Naive thymus-derived CD4-positive, alpha-beta T cell (primary cell): ENCODE measurements at regions of chr17 and their contacts with region 1.

Region 1: DNA sequence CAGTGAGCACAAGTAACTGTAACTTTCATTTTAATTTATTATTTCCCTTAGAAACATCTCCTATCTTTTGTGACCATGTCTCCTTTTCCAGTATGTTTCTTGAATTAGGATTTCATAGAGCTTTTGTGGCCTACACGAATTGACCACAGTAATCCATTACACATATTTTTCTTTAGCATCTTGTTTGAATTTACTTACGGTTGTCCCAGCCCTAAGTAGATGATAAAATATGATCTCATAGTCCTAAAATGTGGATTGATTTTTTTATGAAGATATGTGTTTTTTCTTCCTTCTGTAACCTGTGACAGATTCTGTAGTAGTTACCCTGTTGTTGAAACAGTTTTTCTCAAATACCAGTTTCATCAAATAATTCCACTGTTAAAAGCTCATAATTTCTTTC is 61.5 kb downstream of the NF1 start:
- DNase-seq: no peak
- ATAC-seq: no peak
- H3K4me3 ChIP-seq: no peak overlapping the region
- H3K4me3 Mint-ChIP-seq: no peak overlapping the region
- H3K27ac ChIP-seq: no peak overlapping the region
- H3K27ac Mint-ChIP-seq: peak overlapping the region in 1 of 9 donors; percentile 5
- H3K4me1 ChIP-seq: no peaks in the 10 kb centered on the region
- H3K4me1 Mint-ChIP-seq: peaks cover 0 to 23% (median 16%) of the 10 kb centered on the region in 7 donors
- H3K27me3 ChIP-seq: no peaks in the 10 kb centered on the region
- H3K27me3 Mint-ChIP-seq: no peaks in the 10 kb centered on the region

Region 2: DNA sequence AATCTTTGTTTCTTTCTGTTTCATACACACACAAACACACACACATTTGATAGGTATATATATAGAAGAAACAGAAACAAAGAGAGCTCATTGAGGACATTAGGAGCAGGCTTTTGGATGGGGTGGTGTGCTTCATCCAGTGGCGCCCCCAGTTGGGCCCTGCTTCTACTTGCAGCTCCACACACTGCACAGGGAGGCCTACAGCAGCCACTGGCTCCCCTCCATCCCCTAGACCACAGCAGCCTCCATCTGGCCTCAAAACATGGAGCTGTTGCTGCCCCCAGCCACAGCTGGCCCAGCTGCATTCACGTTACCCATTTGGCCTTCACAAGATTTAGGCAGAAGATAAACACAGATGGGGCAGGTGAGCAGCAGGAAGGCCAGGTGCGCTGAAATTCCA is 94.6 kb before region 1 on chr17:
- CTCF ChIA-PET with region 1: no interaction called
- POLR2A ChIA-PET with region 1: no interaction called
- intact Hi-C with region 1: no loop called
- DNase-seq: no peak
- ATAC-seq: no peak
- H3K4me3 ChIP-seq: no peak overlapping the region
- H3K4me3 Mint-ChIP-seq: no peak overlapping the region
- H3K27ac ChIP-seq: no peak overlapping the region
- H3K27ac Mint-ChIP-seq: no peak overlapping the region
- H3K4me1 ChIP-seq: no peaks in the 10 kb centered on the region
- H3K4me1 Mint-ChIP-seq: peaks cover 0 to 2% (median 0%) of the 10 kb centered on the region in 7 donors
- H3K27me3 ChIP-seq: no peaks in the 10 kb centered on the region
- H3K27me3 Mint-ChIP-seq: no peaks in the 10 kb centered on the region

Region 3: GRCh38 chr17:31094600-31095238 is 61.6 kb before region 1 on chr17 and contains the start of gene NF1:
- CTCF ChIA-PET with region 1: no interaction called
- POLR2A ChIA-PET with region 1: no interaction called
- intact Hi-C with region 1: loop called in 1 of 2 experiments (anchors 5 kb)
- DNase-seq: peak; percentile 57 to 86 (median 72)
- ATAC-seq: peak; percentile 88
- H3K4me3 ChIP-seq: peak within 1 kb of the TSS; percentile 71
- H3K4me3 Mint-ChIP-seq: peak within 1 kb of the TSS; percentile 83 to 98 (median 94)
- H3K27ac ChIP-seq: peak within 1 kb of the TSS; percentile 76
- H3K27ac Mint-ChIP-seq: peak within 1 kb of the TSS; percentile 80 to 97 (median 92)
- H3K4me1 ChIP-seq: peaks cover 0 to 8% of the 10 kb centered on the region in 2 donors
- H3K4me1 Mint-ChIP-seq: peaks cover 10 to 22% (median 13%) of the 10 kb centered on the region in 7 donors
- H3K27me3 ChIP-seq: no peaks in the 10 kb centered on the region
- H3K27me3 Mint-ChIP-seq: no peaks in the 10 kb centered on the region
- total RNA-seq, gene NF1: 18.8 to 32.4 (median 21.2) TPM

Region 4: GRCh38 chr17:31171701-31172100 is 15.4 kb after region 1 on chr17:
- CTCF ChIA-PET with region 1: no interaction called
- POLR2A ChIA-PET with region 1: no interaction called
- intact Hi-C with region 1: no loop called
- DNase-seq: no peak
- ATAC-seq: no peak
- H3K4me3 ChIP-seq: no peak overlapping the region
- H3K4me3 Mint-ChIP-seq: no peak overlapping the region
- H3K27ac ChIP-seq: no peak overlapping the region
- H3K27ac Mint-ChIP-seq: no peak overlapping the region
- H3K4me1 ChIP-seq: no peaks in the 10 kb centered on the region
- H3K4me1 Mint-ChIP-seq: peaks cover 0 to 3% (median 0%) of the 10 kb centered on the region in 7 donors
- H3K27me3 ChIP-seq: no peaks in the 10 kb centered on the region
- H3K27me3 Mint-ChIP-seq: no peaks in the 10 kb centered on the region

Region 5: DNA sequence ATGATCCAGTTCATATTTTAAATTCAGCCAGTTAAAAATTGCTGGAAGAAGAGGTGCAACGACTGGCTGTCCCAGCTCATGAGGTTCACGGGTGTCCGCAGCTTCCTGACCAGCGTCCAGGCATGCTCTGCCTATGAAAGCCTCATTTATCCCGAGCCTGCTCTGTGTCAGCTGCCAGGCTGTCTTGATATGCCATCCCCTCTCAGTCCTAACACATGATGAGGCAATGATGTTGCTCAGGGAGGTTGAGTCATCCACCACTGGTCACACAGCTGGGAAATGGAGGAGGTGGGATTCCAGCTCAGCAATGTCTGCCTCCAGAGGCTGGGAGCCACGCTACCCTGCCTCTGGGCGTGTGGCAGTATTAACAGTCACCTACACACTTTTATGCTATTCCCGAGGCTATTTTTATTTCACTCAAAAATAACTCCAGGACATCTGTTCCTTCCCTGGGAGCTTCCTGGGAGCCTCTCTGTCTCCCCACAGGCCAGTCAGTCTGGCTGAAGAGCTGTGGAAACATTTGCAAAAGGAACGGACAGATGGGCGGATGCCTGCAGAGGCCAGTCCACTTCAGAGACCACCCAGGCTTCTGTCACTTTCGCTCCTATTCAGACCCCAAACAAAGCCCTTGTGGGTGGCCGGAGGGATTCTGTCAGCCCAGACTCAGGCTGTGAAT is 257.7 kb after region 1 on chr17:
- CTCF ChIA-PET with region 1: no interaction called
- POLR2A ChIA-PET with region 1: no interaction called
- intact Hi-C with region 1: no loop called
- DNase-seq: no peak
- ATAC-seq: no peak
- H3K4me3 ChIP-seq: no peak overlapping the region
- H3K4me3 Mint-ChIP-seq: no peak overlapping the region
- H3K27ac ChIP-seq: no peak overlapping the region
- H3K27ac Mint-ChIP-seq: no peak overlapping the region
- H3K4me1 ChIP-seq: no peaks in the 10 kb centered on the region
- H3K4me1 Mint-ChIP-seq: no peaks in the 10 kb centered on the region
- H3K27me3 ChIP-seq: no peaks in the 10 kb centered on the region
- H3K27me3 Mint-ChIP-seq: peaks cover 0 to 3% (median 0%) of the 10 kb centered on the region in 5 donors